Ascending aorta (tissue), 2 donors: ENCODE measurements at regions of chr2 and their contacts with region 1.

Region 1: DNA sequence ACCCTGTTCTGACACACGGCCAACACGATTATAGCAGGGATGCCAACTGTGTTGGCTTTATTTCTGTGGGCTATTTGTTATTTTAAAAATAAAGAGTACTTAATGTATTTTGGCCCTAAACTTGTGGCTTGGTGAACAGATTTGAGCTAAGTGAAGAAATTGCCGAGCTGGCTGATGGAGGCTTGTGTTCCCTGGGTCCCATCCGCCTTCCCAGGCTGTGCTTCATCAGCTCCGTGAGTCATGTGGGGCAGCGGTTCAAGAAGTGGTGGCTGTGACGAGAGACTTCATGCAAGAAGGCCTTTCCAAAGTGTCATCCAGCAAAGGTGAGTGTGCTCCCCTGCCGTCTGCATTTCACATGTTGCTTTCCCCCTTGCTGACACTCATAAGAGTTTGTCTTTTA is 73.6 kb upstream of the NCK2 start:
- DNase-seq: peak; percentile 26 to 80
- H3K4me3 ChIP-seq: no peak overlapping the region
- H3K27ac ChIP-seq: peak overlapping the region; percentile 29 to 37
- H3K4me1 ChIP-seq: peaks cover 0 to 8% of the 10 kb centered on the region in 2 donors
- H3K27me3 ChIP-seq: no peaks in the 10 kb centered on the region
- CTCF ChIP-seq: no peak

Region 2: DNA sequence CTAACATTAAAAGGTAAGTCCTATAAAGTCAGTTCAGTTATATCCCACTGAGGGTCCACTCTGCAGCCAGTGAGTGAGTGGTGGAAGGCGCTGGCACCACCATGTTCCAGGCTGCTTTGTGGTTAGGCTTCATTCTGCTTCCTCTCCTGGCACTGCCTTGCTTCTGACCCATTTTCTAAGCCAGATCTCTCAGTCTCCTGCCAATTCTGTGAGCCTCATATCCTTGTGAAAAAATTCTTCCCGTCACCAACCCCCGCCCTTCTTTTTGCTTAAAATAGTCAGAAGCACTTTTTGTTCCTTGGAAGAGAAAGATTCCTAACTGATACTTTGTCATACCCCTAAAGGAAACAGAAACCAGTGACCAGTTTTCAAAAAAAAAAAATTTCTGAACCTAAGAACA is 66.2 kb before region 1 on chr2:
- intact Hi-C with region 1: loop called (anchors 2 kb)
- DNase-seq: peak in 1 of 2 donors; percentile 90
- H3K4me3 ChIP-seq: peak overlapping the region in 1 of 2 donors; percentile 21
- H3K27ac ChIP-seq: peak overlapping the region; percentile 58 to 68
- H3K4me1 ChIP-seq: peaks cover 0 to 19% of the 10 kb centered on the region in 2 donors
- H3K27me3 ChIP-seq: no peaks in the 10 kb centered on the region
- CTCF ChIP-seq: no peak